Endothelial cell of umbilical vein (primary cell): ENCODE measurements at regions of chr12 and their contacts with region 1.

Region 1: GRCh38 chr12:57005980-57006808 is at the start of gene ZBTB39:
- DNase-seq: peak; percentile 37
- H3K4me3 ChIP-seq: peak within 1 kb of the TSS; percentile 64 to 91 (median 91)
- H3K27ac ChIP-seq: no peak within 1 kb of the TSS
- H3K4me1 ChIP-seq: peaks cover 8% of the 10 kb centered on the region
- H3K27me3 ChIP-seq: peaks cover under 1 to 2% of the 10 kb centered on the region in 2 experiments
- CTCF ChIP-seq: peak; percentile 44 to 56
- POLR2A ChIP-seq: peak; percentile 73
- total RNA-seq, gene ZBTB39: 8.1 and 8.5 TPM in 2 replicates

Region 2: DNA sequence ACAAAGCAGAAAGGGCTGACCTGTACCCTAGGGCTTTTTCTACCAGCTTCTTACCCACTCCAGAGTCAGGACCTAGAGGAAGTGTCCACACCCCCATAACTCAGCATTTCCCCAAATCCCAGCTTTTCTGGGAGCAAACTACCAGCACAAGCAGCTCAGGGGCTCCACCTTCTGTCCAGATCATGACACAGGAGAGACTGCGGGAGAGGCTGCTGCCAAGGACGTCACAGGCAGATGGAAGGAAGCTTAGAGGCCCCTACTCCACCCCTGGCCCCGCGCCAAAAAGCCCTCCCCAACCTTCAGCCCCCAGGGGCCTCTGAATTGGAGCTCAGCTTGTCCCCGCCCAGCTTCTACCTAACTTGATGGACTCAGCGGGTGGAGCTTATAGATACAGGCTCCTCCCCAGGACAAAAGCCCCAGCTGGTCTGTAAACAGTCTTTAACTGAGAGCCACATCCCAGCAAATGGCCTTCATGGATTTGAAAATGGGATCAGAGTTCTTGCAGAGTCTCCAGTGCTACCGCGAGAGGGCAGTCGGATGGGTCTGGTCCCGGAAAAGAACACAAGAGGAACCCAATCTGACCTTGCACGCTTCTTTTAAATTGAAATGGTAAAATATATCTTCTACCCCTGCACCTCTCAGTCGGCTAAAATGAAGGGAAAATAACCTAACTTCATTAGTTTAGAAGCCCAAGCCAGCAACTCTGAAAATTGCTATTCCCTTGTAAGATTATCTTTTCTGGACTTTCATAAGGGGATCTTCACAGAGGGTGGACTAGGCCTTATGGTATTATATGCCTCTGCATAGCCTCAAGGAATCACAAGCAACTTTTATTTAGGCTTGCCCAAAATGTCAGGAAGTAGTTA is 369.3 kb before region 1 on chr12:
- CTCF ChIA-PET with region 1: interaction called, 12 read pairs
- POLR2A ChIA-PET with region 1: no interaction called
- dilution Hi-C with region 1: no loop called
- intact Hi-C with region 1: no loop called
- DNase-seq: peak; percentile 99
- H3K4me3 ChIP-seq: peak overlapping the region in 2 of 3 experiments; percentile 21 to 76
- H3K27ac ChIP-seq: peak overlapping the region; percentile 48
- H3K4me1 ChIP-seq: peaks cover 34% of the 10 kb centered on the region
- H3K27me3 ChIP-seq: no peaks in the 10 kb centered on the region
- CTCF ChIP-seq: peak; percentile 65 to 77
- POLR2A ChIP-seq: peak; percentile 78

Region 3: GRCh38 chr12:56758728-56759262 is 247.4 kb before region 1 on chr12:
- CTCF ChIA-PET with region 1: interaction called, 44 read pairs
- POLR2A ChIA-PET with region 1: interaction called, 3 read pairs
- dilution Hi-C with region 1: no loop called
- intact Hi-C with region 1: loop called (anchors 1 kb)
- DNase-seq: no peak
- H3K4me3 ChIP-seq: no peak overlapping the region
- H3K27ac ChIP-seq: no peak overlapping the region
- H3K4me1 ChIP-seq: no peaks in the 10 kb centered on the region
- H3K27me3 ChIP-seq: peaks cover 0 to 2% of the 10 kb centered on the region in 2 experiments
- CTCF ChIP-seq: no peak
- POLR2A ChIP-seq: no peak

Region 4: DNA sequence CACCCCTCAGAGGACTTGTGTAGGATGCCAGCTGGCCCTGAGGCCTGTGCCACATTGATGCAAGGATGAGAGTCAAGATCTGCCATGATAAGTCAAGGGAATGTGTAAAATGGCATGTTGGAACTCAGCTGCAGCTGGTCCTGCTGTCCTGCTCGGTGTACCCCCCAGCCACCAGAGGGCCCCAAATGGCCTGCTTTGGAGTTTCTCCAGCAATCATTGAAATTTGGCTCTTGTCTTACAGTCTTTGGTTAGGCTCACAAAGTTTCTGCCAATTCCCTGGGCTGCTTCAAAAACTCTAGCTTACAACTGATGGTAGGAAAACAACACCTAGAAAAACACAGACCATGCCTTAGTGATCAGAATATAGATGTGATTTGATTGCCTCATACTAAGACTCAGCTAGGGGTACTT is 166.3 kb before region 1 on chr12:
- CTCF ChIA-PET with region 1: interaction called, 30 read pairs
- POLR2A ChIA-PET with region 1: no interaction called
- dilution Hi-C with region 1: no loop called
- intact Hi-C with region 1: loop called (anchors 1 kb)
- DNase-seq: peak; percentile 45
- H3K4me3 ChIP-seq: no peak overlapping the region
- H3K27ac ChIP-seq: no peak overlapping the region
- H3K4me1 ChIP-seq: no peaks in the 10 kb centered on the region
- H3K27me3 ChIP-seq: peaks cover 13 to 20% of the 10 kb centered on the region in 2 experiments
- CTCF ChIP-seq: peak; percentile 43 to 66
- POLR2A ChIP-seq: no peak

Region 5: GRCh38 chr12:56987551-56988053 is 18.6 kb before region 1 on chr12:
- CTCF ChIA-PET with region 1: interaction called, 50 read pairs
- POLR2A ChIA-PET with region 1: no interaction called
- dilution Hi-C with region 1: no loop called
- intact Hi-C with region 1: loop called (anchors 1 kb)
- DNase-seq: peak; percentile 55
- H3K4me3 ChIP-seq: no peak overlapping the region
- H3K27ac ChIP-seq: peak overlapping the region; percentile 3
- H3K4me1 ChIP-seq: peaks cover 30% of the 10 kb centered on the region
- H3K27me3 ChIP-seq: peaks cover 2 to 3% of the 10 kb centered on the region in 2 experiments
- CTCF ChIP-seq: peak; percentile 93
- POLR2A ChIP-seq: no peak

Region 6: DNA sequence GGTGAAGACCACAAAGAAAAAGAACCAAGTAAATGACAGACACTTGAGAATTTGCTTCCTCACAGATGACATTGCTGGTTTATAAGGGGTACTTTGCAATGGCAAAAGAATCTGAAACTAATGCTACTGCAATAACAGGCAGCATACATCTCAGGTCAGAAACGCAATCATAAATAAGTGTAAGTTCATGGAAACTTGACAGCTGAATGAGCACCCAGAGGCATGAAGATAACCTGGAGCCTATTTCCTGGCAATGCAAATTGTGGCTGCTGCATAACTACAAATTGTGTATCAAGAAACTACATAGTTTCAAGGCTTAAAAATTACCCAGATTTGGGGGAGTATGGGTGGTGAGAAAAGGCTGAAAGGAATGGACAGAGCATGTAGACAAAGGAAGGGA is 52.3 kb after region 1 on chr12:
- CTCF ChIA-PET with region 1: interaction called, 22 read pairs
- POLR2A ChIA-PET with region 1: no interaction called
- dilution Hi-C with region 1: no loop called
- intact Hi-C with region 1: loop called (anchors 1 kb)
- DNase-seq: no peak
- H3K4me3 ChIP-seq: no peak overlapping the region
- H3K27ac ChIP-seq: no peak overlapping the region
- H3K4me1 ChIP-seq: no peaks in the 10 kb centered on the region
- H3K27me3 ChIP-seq: no peaks in the 10 kb centered on the region
- CTCF ChIP-seq: no peak
- POLR2A ChIP-seq: no peak

Region 7: GRCh38 chr12:57111031-57111734 is 105.0 kb after region 1 on chr12 and contains the start of gene STAT6:
- CTCF ChIA-PET with region 1: interaction called, 32 read pairs
- POLR2A ChIA-PET with region 1: no interaction called
- dilution Hi-C with region 1: no loop called
- intact Hi-C with region 1: loop called (anchors 1 kb)
- DNase-seq: peak; percentile 79
- H3K4me3 ChIP-seq: peak within 1 kb of the TSS; percentile 31 to 72 (median 65)
- H3K27ac ChIP-seq: peak within 1 kb of the TSS; percentile 79
- H3K4me1 ChIP-seq: peaks cover 14% of the 10 kb centered on the region
- H3K27me3 ChIP-seq: peaks cover 0 to 2% of the 10 kb centered on the region in 2 experiments
- CTCF ChIP-seq: no peak
- POLR2A ChIP-seq: peak; percentile 31
- total RNA-seq, gene STAT6: 101 and 136 TPM in 2 replicates